CD4-positive, alpha-beta memory T cell (primary cell): ENCODE measurements at regions of chr10 and their contacts with region 1.

Region 1: DNA sequence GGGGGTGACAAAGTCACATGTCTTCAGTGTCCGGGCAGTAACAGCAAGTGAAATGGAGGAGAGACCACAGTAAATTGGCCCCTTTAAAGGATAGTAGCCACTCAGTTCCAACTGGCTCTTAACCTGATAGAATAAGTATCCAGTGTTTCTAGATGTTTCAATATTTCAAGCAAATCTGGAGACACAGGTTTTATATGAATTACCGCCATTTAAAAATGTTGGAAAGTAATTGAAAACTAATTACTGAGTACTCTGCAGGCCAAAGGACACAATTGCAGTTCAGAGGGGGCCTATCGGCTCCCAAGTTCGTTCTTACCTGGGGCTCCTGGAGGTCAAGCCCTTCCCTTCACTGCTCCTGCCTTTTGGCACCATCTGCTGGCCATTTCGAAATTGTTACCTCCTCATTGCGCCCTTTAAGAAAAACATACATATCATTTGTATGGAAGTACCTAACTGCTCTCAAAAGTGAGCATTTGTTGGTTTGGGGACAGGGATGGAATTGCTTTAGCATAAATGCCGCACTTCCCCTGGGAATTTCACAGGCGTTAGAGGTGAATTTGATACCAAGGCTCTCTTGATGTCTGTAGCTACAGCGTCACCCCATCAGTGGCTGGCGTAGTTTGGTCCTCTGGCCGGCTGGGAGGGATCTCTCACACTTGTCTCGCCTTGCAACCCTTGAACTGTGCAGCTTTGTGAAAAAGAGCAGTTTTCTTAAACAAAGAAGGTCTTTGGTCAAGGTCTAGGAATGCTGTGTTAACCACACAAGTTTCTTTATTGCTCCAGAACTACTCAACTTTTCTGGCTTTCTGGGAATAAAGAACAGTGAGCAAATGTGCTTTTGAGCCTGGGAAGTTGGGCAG is 220.0 kb downstream of the ARHGAP21 start:
- DNase-seq: peak in 4 of 5 donors; percentile 10 to 18 (median 14)
- H3K4me3 ChIP-seq: no peak overlapping the region
- H3K4me3 Mint-ChIP-seq: no peak overlapping the region
- H3K27ac ChIP-seq: no peak overlapping the region
- H3K27ac Mint-ChIP-seq: no peak overlapping the region
- H3K4me1 ChIP-seq: no peaks in the 10 kb centered on the region
- H3K4me1 Mint-ChIP-seq: peaks cover 0 to 1% (median 0%) of the 10 kb centered on the region in 4 donors
- H3K27me3 ChIP-seq: no peaks in the 10 kb centered on the region
- H3K27me3 Mint-ChIP-seq: peaks cover 3 to 5% of the 10 kb centered on the region in 2 donors

Region 2: GRCh38 chr10:24197263-24197662 is 306.4 kb before region 1 on chr10:
- CTCF ChIA-PET with region 1: no interaction called
- POLR2A ChIA-PET with region 1: no interaction called
- intact Hi-C with region 1: loop called (anchors 2 kb)
- DNase-seq: no peak
- H3K4me3 ChIP-seq: no peak overlapping the region
- H3K4me3 Mint-ChIP-seq: no peak overlapping the region
- H3K27ac ChIP-seq: no peak overlapping the region
- H3K27ac Mint-ChIP-seq: no peak overlapping the region
- H3K4me1 ChIP-seq: no peaks in the 10 kb centered on the region
- H3K4me1 Mint-ChIP-seq: no peaks in the 10 kb centered on the region
- H3K27me3 ChIP-seq: no peaks in the 10 kb centered on the region
- H3K27me3 Mint-ChIP-seq: no peaks in the 10 kb centered on the region

Region 3: GRCh38 chr10:24415455-24416125 is 88.1 kb before region 1 on chr10:
- CTCF ChIA-PET with region 1: interaction called, 5 read pairs
- POLR2A ChIA-PET with region 1: no interaction called
- intact Hi-C with region 1: loop called (anchors 10 kb)
- DNase-seq: peak in 1 of 5 donors; percentile 3
- H3K4me3 ChIP-seq: no peak overlapping the region
- H3K4me3 Mint-ChIP-seq: no peak overlapping the region
- H3K27ac ChIP-seq: no peak overlapping the region
- H3K27ac Mint-ChIP-seq: peak overlapping the region in 2 of 7 donors; percentile 30 to 37
- H3K4me1 ChIP-seq: no peaks in the 10 kb centered on the region
- H3K4me1 Mint-ChIP-seq: no peaks in the 10 kb centered on the region
- H3K27me3 ChIP-seq: peaks cover 5% of the 10 kb centered on the region
- H3K27me3 Mint-ChIP-seq: peaks cover 8 to 12% of the 10 kb centered on the region in 2 donors

Region 4: GRCh38 chr10:24518981-24519597 is 15.4 kb after region 1 on chr10:
- CTCF ChIA-PET with region 1: interaction called, 42 read pairs
- POLR2A ChIA-PET with region 1: interaction called, 3 read pairs
- intact Hi-C with region 1: no loop called
- DNase-seq: peak; percentile 12 to 42 (median 19)
- H3K4me3 ChIP-seq: no peak overlapping the region
- H3K4me3 Mint-ChIP-seq: peak overlapping the region in 7 of 8 donors; percentile 10 to 78 (median 51)
- H3K27ac ChIP-seq: no peak overlapping the region
- H3K27ac Mint-ChIP-seq: no peak overlapping the region
- H3K4me1 ChIP-seq: peaks cover 12% of the 10 kb centered on the region
- H3K4me1 Mint-ChIP-seq: peaks cover 8 to 15% (median 12%) of the 10 kb centered on the region in 4 donors
- H3K27me3 ChIP-seq: no peaks in the 10 kb centered on the region
- H3K27me3 Mint-ChIP-seq: no peaks in the 10 kb centered on the region

Region 5: GRCh38 chr10:24603333-24603732 is 99.6 kb after region 1 on chr10:
- CTCF ChIA-PET with region 1: no interaction called
- POLR2A ChIA-PET with region 1: no interaction called
- intact Hi-C with region 1: no loop called
- DNase-seq: no peak
- H3K4me3 ChIP-seq: no peak overlapping the region
- H3K4me3 Mint-ChIP-seq: no peak overlapping the region
- H3K27ac ChIP-seq: no peak overlapping the region
- H3K27ac Mint-ChIP-seq: peak overlapping the region in 2 of 7 donors; percentile 39 to 60
- H3K4me1 ChIP-seq: no peaks in the 10 kb centered on the region
- H3K4me1 Mint-ChIP-seq: peaks cover 2 to 8% (median 4%) of the 10 kb centered on the region in 4 donors
- H3K27me3 ChIP-seq: no peaks in the 10 kb centered on the region
- H3K27me3 Mint-ChIP-seq: no peaks in the 10 kb centered on the region